HEK293 (cell line): ENCODE measurements at regions of chr6 and their contacts with region 1.

Region 1: DNA sequence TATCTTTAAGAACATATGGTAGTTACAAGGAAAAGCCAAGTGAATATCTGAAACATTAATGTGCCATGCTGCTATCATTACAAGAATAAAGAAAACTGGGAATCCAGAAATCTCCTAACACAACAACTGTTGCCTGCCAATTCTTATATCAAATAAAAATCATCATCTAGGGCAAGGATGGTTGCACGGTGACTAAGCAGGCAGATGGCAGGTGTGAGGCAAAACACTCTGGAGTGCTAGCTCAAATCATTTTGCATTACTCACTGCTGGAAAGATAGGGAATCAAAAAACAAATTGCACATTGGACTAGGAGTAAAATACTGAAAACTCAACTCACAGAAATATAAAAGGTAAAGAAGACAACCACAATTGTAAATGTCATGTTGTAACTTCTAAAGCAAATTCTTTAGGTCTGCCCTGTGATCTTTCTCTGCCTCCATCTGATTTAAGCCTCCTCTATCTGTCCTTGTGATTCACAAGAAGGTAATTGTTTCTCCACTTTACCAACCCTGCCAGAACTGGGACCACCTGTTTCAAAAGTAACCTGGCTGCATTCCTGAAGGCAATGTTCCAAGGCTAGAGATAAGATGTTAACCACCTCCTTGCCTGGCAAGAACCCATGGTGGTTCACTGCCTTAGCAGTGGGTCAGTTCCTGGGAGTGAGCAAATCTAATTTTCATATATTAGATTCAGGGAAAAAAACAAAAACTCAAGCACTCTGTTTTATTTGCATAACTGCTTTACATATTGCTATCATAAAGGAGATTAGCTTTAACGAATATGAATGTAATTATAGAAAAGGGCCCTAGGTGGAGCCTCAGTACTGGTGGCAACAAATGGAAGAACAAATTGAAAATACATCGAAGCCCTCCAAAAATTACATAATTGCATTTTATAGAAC is 33.1 kb upstream of the LCA5 start:
- H3K4me3 ChIP-seq: no peak overlapping the region
- H3K27ac ChIP-seq: no peak overlapping the region
- H3K4me1 ChIP-seq: no peaks in the 10 kb centered on the region
- CTCF ChIP-seq: no peak

Region 2: GRCh38 chr6:79557673-79558467 is 12.5 kb before region 1 on chr6:
- CTCF ChIA-PET with region 1: interaction called, 10 read pairs
- POLR2A ChIA-PET with region 1: no interaction called
- H3K4me3 ChIP-seq: no peak overlapping the region
- H3K27ac ChIP-seq: no peak overlapping the region
- H3K4me1 ChIP-seq: no peaks in the 10 kb centered on the region
- CTCF ChIP-seq: no peak

Region 3: DNA sequence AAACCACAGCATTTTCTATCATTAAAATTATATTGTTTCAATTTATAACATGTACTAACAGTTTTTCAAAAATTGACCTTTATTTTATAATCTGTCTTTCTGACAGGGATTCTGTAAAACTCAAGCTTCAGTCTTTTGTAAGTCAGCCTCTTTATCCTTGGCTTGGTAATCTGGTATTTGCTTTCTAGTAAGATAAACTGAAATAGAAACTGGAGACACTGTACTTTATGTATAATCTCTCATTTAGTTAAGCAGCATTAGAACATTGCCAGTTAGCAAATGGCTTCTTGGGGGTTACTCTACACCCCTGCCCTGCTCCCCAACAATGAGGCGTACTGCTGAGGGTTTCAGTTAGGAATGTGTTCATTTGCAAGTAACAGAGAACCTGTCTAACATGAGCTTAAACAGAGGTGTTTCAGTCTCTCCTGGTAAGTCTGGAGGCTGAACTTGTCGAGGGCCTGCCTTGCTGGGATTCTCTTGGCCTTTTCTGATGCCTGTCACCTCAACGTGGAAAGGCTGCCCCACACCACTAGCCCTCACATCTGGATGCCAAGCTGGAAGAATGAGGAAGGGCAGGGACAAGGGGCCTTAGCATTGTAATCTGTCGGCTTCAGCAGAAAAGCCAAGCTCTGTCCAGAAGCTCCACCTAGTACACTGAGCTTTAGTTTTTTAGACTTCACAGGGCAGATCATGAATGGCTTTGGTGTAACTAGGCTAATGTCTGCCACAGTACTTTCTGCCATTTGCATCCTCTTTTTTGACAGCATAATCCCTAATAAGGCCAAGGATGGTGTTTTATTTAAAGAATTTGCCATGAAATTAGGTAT is 95.6 kb after region 1 on chr6:
- CTCF ChIA-PET with region 1: interaction called, 10 read pairs
- POLR2A ChIA-PET with region 1: no interaction called
- H3K4me3 ChIP-seq: no peak overlapping the region
- H3K27ac ChIP-seq: no peak overlapping the region
- H3K4me1 ChIP-seq: no peaks in the 10 kb centered on the region; the same call in 1 of the 2 replicates
- CTCF ChIP-seq: no peak

Region 4: DNA sequence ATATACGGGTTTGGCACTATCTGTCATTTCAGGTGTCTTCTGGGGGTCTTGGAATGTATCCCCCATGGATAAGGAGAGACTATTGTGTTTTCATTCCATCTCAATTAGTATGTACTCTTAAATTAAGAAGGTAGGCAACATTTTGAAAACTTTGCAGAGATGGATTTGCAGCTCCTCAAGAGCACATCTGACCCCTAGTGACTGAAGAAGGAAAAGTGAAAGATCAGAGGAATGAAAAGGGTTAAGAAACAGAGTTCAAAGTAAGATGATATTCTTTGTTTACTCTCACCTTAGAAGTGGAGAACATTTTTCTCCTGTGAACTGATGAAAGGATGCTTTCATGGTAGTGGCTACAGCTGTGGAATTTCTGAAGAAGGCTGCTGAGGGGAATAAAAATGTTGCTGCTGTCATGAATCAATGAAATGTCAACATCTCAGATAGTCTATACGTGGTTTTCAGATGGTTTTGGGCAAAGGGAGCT is 102.3 kb after region 1 on chr6:
- CTCF ChIA-PET with region 1: interaction called, 30 read pairs
- POLR2A ChIA-PET with region 1: no interaction called
- H3K4me3 ChIP-seq: no peak overlapping the region
- H3K27ac ChIP-seq: no peak overlapping the region
- H3K4me1 ChIP-seq: no peaks in the 10 kb centered on the region; the same call in 1 of the 2 replicates
- CTCF ChIP-seq: no peak

Region 5: DNA sequence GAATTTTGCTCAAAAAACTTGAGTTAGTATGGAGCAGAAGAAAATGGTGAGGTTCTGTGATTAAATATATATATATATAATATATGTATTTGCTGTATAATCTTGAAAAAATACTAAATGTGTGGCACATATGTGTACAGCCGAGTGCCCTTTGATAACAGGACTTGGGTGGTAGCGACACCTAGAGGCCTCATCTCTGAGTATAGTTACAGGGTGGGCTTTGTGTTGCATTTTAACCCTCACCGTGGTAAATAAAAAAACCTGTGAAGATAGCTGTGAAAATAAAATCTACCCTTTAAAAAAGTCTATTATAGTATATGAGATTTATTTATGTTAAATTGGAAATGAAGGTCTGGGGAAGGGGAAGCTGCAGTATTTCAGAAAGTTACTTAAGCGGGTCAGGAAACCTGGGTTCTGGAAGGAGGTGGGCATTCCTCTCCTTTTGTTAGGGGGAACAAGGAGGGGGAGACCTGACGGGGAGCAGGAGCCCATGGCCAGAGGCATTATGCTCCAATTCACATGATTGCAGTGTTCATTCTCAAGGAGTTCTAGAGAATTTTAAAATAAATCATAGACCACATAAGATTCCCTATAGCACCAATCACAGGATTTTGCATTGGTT is 143.4 kb after region 1 on chr6:
- CTCF ChIA-PET with region 1: interaction called, 16 read pairs
- POLR2A ChIA-PET with region 1: no interaction called
- H3K4me3 ChIP-seq: no peak overlapping the region
- H3K27ac ChIP-seq: no peak overlapping the region
- H3K4me1 ChIP-seq: no peaks in the 10 kb centered on the region
- CTCF ChIP-seq: no peak